Posterior vena cava (tissue), 2 donors: ENCODE measurements at regions of chr13 and their contacts with region 1.

Region 1: DNA sequence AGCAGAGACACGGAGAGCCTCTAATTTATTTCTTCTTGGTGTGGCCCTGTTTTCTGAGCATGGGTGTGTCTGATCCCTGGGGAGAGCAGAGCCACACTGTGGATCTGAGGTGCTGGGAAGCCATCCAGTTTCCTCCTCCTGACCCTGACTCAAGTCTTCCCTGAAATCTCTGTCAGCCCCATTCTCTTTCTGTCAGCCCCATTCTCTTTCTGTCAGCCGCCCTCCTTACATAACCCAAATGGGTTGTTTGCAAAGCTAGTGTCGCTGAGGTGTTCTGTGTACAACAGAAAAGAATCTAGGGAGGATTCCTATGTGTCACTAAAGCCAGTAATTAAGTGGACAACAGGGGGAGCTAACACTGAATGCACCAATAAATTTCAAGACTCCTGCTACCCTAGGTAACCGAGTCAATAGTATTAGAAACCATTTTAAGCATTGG is 50.2 kb downstream of the LRCH1 start:
- DNase-seq: no peak

Region 2: DNA sequence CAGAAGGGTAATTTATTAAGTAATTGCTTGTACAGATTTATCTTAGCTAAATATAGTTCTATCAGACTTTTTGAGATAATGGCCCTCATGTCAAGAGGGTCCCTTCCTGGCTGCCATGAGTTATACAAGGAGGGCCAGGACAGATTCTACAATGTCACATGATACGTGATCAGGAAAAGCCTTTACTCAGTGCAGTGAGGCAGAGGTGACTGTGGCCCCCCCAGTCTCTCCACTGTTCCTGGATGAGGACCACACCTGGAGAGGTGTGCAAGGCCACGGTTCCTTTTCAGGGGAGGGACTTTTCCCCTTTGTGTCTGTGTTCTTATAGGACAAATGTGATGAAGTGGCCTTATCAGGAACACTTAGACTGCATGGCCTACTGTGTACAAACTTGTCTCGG is 104.5 kb before region 1 on chr13:
- intact Hi-C with region 1: no loop called
- DNase-seq: no peak

Region 3: DNA sequence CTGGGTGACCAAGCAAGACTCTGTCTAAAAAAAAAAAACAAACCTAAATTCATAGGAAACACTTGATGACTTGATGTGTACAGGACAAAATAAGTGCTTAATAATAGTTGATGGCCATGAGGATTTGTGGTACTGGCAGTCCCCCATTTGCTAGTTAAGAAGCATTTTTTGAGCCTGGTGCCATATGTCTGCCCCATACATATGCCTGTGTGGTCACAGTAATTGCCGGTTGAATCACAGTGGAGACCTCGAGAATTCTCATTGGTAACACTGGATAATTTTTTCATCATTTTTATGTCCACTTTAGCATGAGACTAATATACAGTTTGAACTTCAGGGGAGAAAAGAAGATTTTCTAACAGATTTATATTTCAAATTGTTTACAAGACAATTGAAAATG is 29.0 kb after region 1 on chr13:
- intact Hi-C with region 1: loop called in 1 of 2 experiments (anchors 1 kb)
- DNase-seq: no peak

Region 4: DNA sequence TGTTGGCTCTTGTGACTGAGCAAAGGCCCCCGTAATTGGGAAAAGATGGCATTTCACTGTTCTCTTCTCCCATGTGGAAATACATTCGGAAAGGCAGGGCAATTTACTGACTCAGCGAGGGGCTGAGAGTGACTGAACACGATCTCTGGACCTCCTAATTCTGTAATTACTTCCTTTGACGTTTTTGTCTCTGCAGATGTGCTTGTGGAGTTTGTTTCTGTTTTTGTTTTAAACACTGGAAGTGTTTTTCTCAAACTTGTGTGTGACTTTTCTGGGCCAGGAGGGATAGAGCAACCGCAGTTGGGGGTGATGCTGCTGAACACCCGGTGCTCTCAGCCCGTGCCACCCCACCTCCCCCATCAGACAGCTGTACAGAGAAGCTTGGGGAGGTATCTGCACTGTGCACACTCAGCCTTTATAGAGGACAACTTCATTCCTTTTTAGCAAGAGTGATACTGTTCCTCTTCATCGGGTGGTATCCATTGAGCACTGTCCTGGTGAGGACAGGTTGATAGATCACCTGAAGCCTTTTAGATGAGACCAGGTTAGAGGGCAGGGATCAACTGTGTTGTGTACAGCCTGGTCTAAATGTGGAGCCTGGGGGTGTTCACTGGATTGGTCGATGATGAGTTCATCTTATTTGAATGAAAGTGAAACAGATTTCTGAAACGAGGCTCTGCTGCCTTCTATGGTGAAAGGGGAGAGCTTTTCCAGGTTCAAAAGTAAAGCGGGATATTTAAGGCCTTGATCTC is 76.4 kb after region 1 on chr13:
- intact Hi-C with region 1: loop called in 1 of 2 experiments (anchors 10 kb)
- DNase-seq: no peak